ENCODE measurements at regions of chr4 and their contacts with region 1.

Region 1: DNA sequence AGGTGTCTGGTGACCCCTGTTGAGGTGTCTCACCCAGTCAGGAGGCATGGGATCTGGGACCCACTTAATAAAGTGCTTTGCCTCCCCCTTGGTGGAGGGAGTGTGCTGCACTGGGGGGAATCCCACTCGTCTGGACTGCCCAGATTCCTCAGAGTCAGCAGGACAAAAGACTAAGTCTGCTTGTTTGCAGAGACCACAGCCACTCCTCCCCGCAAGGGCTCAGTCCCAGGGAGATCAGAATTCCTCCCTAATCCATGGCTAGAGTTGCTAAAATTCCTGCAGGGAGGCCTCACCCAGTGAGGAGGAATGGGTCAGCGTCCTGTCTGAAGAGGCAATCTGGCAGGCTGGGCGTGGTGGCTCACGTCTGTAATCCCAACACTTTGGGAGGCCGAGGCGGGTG is 442.2 kb downstream of the PABPC4L start:
- DNase-seq: no peak
- ATAC-seq: no peak
- H3K4me3 ChIP-seq: no peak overlapping the region
- H3K27ac ChIP-seq: no peak overlapping the region
- H3K4me1 ChIP-seq: no peaks in the 10 kb centered on the region
- H3K27me3 ChIP-seq: no peaks in the 10 kb centered on the region

Region 2: GRCh38 chr4:133711817-133712216 is 47.6 kb before region 1 on chr4:
- intact Hi-C with region 1: loop called in 1 of 2 experiments (anchors 5 kb)
- DNase-seq: no peak
- ATAC-seq: no peak
- H3K4me3 ChIP-seq: peak overlapping the region; percentile 46 to 90
- H3K27ac ChIP-seq: no peak overlapping the region
- H3K4me1 ChIP-seq: peaks cover 2 to 3% of the 10 kb centered on the region in 2 donors
- H3K27me3 ChIP-seq: no peaks in the 10 kb centered on the region